A673 (cell line): ENCODE measurements at regions of chr11 and their contacts with region 1.

Region 1: DNA sequence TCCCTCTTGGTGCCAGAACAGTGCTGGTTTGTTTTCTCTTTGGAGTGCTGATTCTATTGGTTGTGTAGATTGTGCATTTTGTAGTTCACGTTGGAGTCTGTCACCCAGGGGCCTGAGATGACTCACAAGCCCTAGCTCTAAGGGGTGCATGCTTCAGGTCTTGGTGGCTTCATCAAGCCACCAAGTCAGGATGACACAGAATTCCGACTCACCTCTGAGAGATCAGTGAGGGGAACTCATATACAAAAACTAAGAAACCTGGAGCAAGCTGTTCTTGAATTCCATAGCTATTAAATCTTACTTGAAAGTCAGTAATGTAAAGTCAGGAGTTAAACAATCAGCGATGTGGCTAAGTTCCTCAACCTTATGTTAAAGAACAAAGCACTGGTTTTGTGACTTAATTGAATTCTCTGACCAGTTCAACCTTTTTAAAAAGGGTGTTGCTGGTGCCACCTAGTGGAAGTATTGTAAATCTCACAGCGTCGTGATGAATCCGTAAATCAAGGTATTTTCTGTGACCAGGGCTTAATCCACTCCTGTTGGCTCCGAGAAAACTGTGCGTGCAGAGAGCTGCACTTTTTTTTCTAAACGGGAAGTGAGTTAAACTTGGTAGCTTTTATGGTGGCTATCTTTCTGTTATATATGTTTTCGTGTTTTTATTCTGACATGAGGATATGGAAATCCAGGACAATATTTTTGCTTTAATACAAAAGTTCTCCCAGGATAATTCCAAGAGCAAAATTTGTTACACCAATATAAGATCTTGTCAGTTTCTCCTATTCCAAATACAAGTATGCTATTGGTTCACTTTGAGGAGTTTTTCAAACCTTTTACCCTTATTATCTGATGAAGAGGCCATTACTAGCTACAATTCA is 14.6 kb downstream of the MMP13 start:
- DNase-seq: peak; percentile 93
- H3K4me3 ChIP-seq: no peak overlapping the region
- H3K27ac ChIP-seq: peak overlapping the region; percentile 11
- H3K4me1 ChIP-seq: peaks cover 21% of the 10 kb centered on the region
- H3K27me3 ChIP-seq: no peaks in the 10 kb centered on the region
- CTCF ChIP-seq: peak; percentile 94

Region 2: DNA sequence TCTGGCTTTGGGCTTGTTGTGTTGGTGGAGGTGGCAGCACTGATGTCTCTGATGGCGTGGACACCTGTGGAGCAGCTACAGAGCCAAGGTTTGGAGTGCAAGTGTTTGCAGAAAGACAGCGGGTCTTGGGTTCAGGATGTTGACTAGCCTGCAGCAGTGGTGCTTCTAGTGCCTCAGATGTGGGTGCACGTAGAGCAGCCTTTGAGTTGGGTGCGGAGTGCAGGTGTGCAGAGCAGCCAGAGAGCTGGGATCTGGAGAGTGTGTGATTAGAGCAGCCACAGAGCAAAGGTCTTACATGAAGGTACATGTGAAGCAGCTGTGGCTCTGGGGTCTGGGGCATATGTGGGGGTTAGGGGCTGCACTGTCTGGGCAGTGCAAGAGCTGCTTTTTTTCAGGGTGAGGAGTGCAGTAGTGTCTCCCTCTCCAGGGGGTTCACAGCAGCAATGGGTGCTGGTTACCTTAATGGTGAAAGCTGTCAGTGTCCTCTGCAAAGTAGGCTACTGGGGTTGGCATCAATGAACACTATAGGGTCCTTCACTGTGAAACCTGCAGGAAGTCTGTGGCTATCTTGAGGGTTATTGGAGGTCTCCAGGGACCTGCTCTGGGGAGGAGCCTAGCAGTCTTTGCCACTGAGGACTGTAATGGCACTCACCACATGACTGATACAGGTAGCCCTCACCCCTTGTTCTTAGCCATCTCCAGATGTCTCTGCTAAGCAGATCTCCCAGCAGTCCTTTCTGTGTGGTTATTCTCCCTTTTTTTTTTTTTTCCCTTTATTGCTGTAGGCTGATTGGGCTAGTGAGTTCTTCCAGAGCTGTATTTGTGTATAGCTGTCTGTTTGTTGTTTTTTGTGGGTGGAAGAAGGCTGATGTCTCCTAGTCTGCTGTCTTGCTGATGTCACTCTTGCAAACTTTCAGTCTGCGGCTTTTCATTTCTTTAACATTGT is 579.6 kb before region 1 on chr11:
- CTCF ChIA-PET with region 1: no interaction called
- POLR2A ChIA-PET with region 1: interaction called, 11 read pairs
- intact Hi-C with region 1: no loop called
- DNase-seq: no peak
- H3K4me3 ChIP-seq: no peak overlapping the region
- H3K27ac ChIP-seq: no peak overlapping the region
- H3K4me1 ChIP-seq: no peaks in the 10 kb centered on the region
- H3K27me3 ChIP-seq: no peaks in the 10 kb centered on the region
- CTCF ChIP-seq: no peak

Region 3: DNA sequence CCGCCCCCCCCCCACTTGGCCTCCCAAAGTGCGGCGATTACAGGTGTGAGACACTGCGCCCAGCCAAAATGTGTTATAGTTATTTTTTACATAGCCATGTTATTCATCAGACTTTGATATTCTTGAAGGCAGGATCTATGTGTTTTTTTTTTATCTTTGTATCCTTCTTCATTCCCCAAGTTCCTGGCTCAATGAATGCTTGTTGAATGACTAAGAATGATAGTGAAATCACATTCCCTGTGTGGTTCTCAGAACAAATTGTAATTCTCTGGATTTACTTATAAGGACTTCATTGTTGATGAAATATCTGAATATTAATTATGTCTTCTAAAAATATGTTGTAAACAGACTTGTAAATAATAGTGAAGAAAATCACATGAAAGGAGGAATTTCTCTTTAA is 443.9 kb before region 1 on chr11:
- CTCF ChIA-PET with region 1: no interaction called
- POLR2A ChIA-PET with region 1: no interaction called
- intact Hi-C with region 1: no loop called
- DNase-seq: no peak
- H3K4me3 ChIP-seq: no peak overlapping the region
- H3K27ac ChIP-seq: no peak overlapping the region
- H3K4me1 ChIP-seq: no peaks in the 10 kb centered on the region
- H3K27me3 ChIP-seq: no peaks in the 10 kb centered on the region
- CTCF ChIP-seq: no peak

Region 4: DNA sequence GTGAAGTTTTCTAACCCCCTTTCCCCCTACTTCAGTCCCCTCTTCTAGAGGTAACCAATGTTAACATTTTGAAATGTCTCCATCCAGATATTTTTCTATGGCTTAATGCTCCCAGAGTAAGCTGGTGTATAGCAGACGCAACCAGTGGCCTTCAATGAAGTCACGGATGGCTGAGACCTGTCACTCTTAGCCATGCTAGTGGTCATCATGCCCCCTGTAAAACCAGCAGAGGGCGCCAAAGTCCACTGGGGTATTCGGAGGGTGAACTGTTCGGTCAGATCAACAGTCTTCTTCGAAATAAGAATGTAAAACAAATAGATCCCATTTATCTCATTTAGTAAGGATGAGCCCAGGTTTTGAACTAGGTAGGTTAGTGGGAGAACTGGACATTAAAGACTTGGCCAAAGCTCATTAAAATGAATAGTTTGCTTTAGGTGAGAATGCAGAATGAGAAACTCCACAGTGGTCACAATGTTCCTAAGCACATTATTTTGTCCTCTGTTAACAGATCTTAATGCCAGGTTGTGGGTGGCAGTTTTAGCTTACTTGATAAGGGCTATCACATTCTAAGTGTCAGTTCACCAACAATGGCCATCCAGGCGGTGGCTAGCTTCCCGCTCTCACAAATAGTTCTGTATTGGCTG is 207.6 kb before region 1 on chr11:
- CTCF ChIA-PET with region 1: no interaction called
- POLR2A ChIA-PET with region 1: no interaction called
- intact Hi-C with region 1: loop called (anchors 1 kb)
- DNase-seq: peak; percentile 82
- H3K4me3 ChIP-seq: no peak overlapping the region
- H3K27ac ChIP-seq: no peak overlapping the region
- H3K4me1 ChIP-seq: no peaks in the 10 kb centered on the region
- H3K27me3 ChIP-seq: no peaks in the 10 kb centered on the region
- CTCF ChIP-seq: peak; percentile 95

Region 5: DNA sequence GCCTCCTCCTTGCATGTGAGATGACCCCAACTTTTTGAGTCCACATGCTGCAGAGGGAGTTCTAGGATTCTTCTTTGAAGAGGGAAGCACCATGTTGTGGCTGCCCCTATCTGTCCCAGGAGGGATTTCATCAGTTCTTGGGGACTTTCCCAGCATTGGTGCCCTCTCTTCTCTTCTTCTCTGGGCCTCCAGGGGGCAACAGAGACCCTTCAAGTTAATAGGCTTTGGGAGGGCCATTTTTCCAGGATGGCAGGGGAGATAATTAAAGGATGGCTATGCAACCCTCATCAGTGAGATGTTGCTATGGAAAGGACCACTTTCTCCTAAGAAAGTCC is 146.5 kb before region 1 on chr11:
- CTCF ChIA-PET with region 1: no interaction called
- POLR2A ChIA-PET with region 1: no interaction called
- intact Hi-C with region 1: loop called (anchors 5 kb)
- DNase-seq: peak; percentile 95
- H3K4me3 ChIP-seq: no peak overlapping the region
- H3K27ac ChIP-seq: peak overlapping the region; percentile 48
- H3K4me1 ChIP-seq: peaks cover 8% of the 10 kb centered on the region
- H3K27me3 ChIP-seq: no peaks in the 10 kb centered on the region
- CTCF ChIP-seq: peak; percentile 85

Region 6: GRCh38 chr11:102810945-102811660 is 129.8 kb before region 1 on chr11:
- CTCF ChIA-PET with region 1: interaction called, 6 read pairs
- POLR2A ChIA-PET with region 1: no interaction called
- intact Hi-C with region 1: loop called (anchors 2 kb)
- DNase-seq: peak; percentile 92
- H3K4me3 ChIP-seq: no peak overlapping the region
- H3K27ac ChIP-seq: peak overlapping the region; percentile 61
- H3K4me1 ChIP-seq: peaks cover 28% of the 10 kb centered on the region
- H3K27me3 ChIP-seq: no peaks in the 10 kb centered on the region
- CTCF ChIP-seq: peak; percentile 83

Region 7: DNA sequence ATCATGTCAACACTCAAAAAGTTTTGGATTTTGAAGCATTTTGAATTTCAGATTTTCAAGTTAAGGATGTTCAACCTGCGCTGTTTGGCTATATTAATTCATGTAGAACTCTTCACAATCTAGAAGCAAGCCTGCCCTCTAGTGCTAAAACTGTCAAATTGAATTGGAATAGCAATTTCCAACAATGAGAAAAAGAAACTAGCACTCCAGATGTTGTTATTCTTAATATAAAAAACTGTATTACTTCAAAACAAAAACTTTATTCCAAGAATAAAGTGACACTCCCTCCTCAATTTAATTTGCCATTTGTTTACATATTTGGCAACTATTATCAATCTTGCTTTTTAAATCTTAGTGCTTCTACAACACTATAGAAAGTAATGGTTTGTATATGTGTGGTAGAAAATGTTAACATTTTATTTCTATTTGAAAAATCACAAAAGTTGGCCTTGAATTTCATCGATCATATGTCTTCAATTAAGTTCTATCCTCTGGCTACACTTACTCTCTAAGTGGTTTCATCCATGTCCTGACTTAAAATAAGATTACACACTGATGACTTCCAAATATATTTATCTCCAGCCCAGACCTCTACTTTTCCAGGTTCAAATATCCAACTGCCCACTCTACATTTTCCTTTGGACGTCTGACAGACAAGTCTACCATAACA is 114.4 kb after region 1 on chr11:
- CTCF ChIA-PET with region 1: no interaction called
- POLR2A ChIA-PET with region 1: no interaction called
- intact Hi-C with region 1: no loop called
- DNase-seq: peak; percentile 86
- H3K4me3 ChIP-seq: no peak overlapping the region
- H3K27ac ChIP-seq: peak overlapping the region; percentile 28
- H3K4me1 ChIP-seq: peaks cover 24% of the 10 kb centered on the region
- H3K27me3 ChIP-seq: no peaks in the 10 kb centered on the region
- CTCF ChIP-seq: peak; percentile 88